T-cell (primary cell): ENCODE measurements at regions of chr16 and their contacts with region 1.

Region 1: GRCh38 chr16:21194771-21195301 is 16.5 kb downstream of the ZP2 start:
- DNase-seq: no peak
- ATAC-seq: no peak
- H3K4me3 ChIP-seq: no peak overlapping the region
- H3K4me3 Mint-ChIP-seq: no peak overlapping the region
- H3K27ac ChIP-seq: no peak overlapping the region
- H3K27ac Mint-ChIP-seq: peak overlapping the region in 1 of 2 donors; percentile 25
- H3K4me1 ChIP-seq: no peaks in the 10 kb centered on the region
- H3K4me1 Mint-ChIP-seq: peaks cover 0 to 4% (median 0%) of the 10 kb centered on the region in 3 donors
- H3K27me3 ChIP-seq: peaks cover 0 to 14% of the 10 kb centered on the region in 2 experiments
- H3K27me3 Mint-ChIP-seq: peaks cover 9 to 23% of the 10 kb centered on the region in 2 donors

Region 2: GRCh38 chr16:21101631-21102420 is 93.0 kb before region 1 on chr16:
- CTCF ChIA-PET with region 1: no interaction called
- POLR2A ChIA-PET with region 1: no interaction called
- DNase-seq: peak in 18 of 35 experiments; percentile 1 to 26 (median 7)
- ATAC-seq: peak in 1 of 4 experiments; percentile 60
- H3K4me3 ChIP-seq: no peak overlapping the region
- H3K4me3 Mint-ChIP-seq: no peak overlapping the region
- H3K27ac ChIP-seq: no peak overlapping the region
- H3K27ac Mint-ChIP-seq: no peak overlapping the region
- H3K4me1 ChIP-seq: no peaks in the 10 kb centered on the region
- H3K4me1 Mint-ChIP-seq: no peaks in the 10 kb centered on the region
- H3K27me3 ChIP-seq: peaks cover 0 to 6% of the 10 kb centered on the region in 2 experiments
- H3K27me3 Mint-ChIP-seq: peaks cover 21 to 26% of the 10 kb centered on the region in 2 donors

Region 3: DNA sequence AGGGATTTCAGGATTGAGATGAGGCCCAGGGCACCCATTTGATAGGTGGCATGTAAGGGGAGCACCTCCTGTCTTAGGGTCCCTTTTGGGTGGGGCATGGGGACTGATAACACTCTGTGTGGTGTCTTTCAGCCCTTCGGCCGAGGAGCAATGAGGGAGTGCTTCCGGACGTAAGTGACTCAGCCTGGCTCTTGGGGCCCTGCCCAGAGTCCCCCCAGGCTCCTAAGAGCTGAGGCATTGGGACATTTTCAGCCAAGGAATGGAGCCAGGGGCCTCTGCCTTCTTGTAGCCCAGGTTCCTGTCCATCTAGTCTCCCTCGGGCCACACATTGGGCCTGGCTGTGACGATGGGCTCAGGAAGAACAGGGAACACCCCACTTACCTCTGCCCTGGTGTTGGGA is 1055.7 kb after region 1 on chr16:
- CTCF ChIA-PET with region 1: interaction called in 1 of 2 experiments, 12 read pairs
- POLR2A ChIA-PET with region 1: no interaction called
- DNase-seq: no peak
- ATAC-seq: no peak
- H3K4me3 ChIP-seq: no peak overlapping the region
- H3K4me3 Mint-ChIP-seq: no peak overlapping the region
- H3K27ac ChIP-seq: no peak overlapping the region
- H3K27ac Mint-ChIP-seq: no peak overlapping the region
- H3K4me1 ChIP-seq: peaks cover 0 to 4% of the 10 kb centered on the region in 2 experiments
- H3K4me1 Mint-ChIP-seq: peaks cover 0 to 5% (median 4%) of the 10 kb centered on the region in 3 donors
- H3K27me3 ChIP-seq: no peaks in the 10 kb centered on the region
- H3K27me3 Mint-ChIP-seq: no peaks in the 10 kb centered on the region